Activated CD4-positive, alpha-beta T cell treated with anti-CD3 and anti-CD28 coated beads for 36 hours (primary cell): ENCODE measurements at regions of chr4 and their contacts with region 1.

Region 1: GRCh38 chr4:25813448-25814106 is 49.2 kb downstream of the SEL1L3 start:
- DNase-seq: no peak
- ATAC-seq: no peak
- H3K4me3 Mint-ChIP-seq: no peak overlapping the region
- H3K27ac Mint-ChIP-seq: no peak overlapping the region
- H3K4me1 Mint-ChIP-seq: no peaks in the 10 kb centered on the region
- H3K27me3 Mint-ChIP-seq: no peaks in the 10 kb centered on the region

Region 2: GRCh38 chr4:24988776-24989175 is 824.8 kb before region 1 on chr4:
- CTCF ChIA-PET with region 1: no interaction called
- POLR2A ChIA-PET with region 1: no interaction called
- intact Hi-C with region 1: no loop called
- DNase-seq: no peak
- ATAC-seq: no peak
- H3K4me3 Mint-ChIP-seq: no peak overlapping the region
- H3K27ac Mint-ChIP-seq: no peak overlapping the region
- H3K4me1 Mint-ChIP-seq: no peaks in the 10 kb centered on the region
- H3K27me3 Mint-ChIP-seq: peaks cover 3% of the 10 kb centered on the region

Region 3: DNA sequence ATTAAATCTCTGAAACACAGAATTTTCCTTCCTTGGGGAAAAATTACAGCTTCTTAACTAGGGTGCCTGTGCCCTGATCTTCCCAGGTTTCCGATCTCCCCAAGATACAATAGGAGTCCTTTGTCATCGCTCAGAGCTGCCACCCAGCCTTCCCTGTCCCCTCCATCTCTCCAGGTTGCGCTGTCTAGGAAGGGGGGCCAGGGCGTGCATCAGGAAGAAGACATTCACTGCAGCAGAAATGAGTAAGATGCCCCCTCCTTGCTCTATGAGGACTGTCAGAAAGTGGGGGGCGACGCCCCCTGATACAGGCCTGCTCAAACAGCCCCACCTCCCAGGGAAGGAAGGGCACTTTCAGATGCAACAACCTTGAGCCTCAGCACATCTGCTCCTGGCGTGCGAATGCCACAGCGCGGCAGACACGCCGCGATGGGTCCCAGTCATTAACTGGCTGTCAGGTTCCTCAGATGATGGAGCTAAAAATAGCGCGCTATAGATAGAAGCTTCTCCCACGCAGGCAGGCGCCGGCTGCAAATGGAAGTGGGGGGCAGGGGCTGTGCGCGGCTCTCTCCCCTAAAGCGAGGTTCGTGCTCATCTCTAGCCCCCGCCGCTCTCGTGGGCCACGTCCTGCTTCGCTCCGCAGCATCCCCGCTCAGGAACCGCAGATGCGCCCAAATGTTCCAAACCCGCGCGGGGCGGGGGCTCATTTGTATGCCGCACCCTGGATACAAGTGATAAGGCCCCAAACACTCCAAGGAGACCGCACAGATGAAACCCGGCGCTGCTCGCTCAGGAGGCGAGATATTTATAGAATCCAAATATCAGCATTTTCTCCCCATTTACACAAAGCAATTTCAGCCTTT is 725.3 kb before region 1 on chr4:
- CTCF ChIA-PET with region 1: no interaction called
- POLR2A ChIA-PET with region 1: no interaction called
- intact Hi-C with region 1: no loop called
- DNase-seq: peak; percentile 43
- ATAC-seq: peak; percentile 64
- H3K4me3 Mint-ChIP-seq: no peak overlapping the region
- H3K27ac Mint-ChIP-seq: no peak overlapping the region
- H3K4me1 Mint-ChIP-seq: peaks cover 17% of the 10 kb centered on the region
- H3K27me3 Mint-ChIP-seq: peaks cover 39% of the 10 kb centered on the region

Region 4: GRCh38 chr4:25776795-25777194 is 36.8 kb before region 1 on chr4:
- CTCF ChIA-PET with region 1: no interaction called
- POLR2A ChIA-PET with region 1: interaction called, 13 read pairs
- intact Hi-C with region 1: no loop called
- DNase-seq: no peak
- ATAC-seq: no peak
- H3K4me3 Mint-ChIP-seq: no peak overlapping the region
- H3K27ac Mint-ChIP-seq: no peak overlapping the region
- H3K4me1 Mint-ChIP-seq: no peaks in the 10 kb centered on the region
- H3K27me3 Mint-ChIP-seq: no peaks in the 10 kb centered on the region